ENCODE measurements at regions of chr19 and their contacts with region 1.

Region 1: DNA sequence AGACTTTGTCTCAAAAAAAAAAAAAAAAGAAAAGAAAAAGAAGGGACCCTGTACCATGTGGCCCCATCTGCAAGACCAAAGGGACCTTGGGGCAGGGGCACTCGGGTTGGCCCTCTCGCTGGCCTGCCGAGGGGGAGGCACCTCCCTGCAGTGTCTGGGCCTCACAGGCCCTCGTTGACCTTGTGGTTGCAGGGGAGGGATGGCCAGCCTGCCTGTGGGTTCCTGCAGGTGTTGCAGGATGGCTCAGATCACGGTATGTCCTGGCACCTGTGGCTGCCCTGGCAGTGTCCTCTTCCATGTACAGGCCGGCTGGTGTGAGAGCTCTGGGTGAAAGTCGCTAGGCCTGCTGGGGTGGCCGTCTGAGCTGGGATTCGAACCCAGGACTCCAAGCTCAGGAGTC is 4.7 kb upstream of the PGLS start:
- DNase-seq: no peak
- ATAC-seq: no peak
- H3K4me3 ChIP-seq: no peak overlapping the region
- H3K27ac ChIP-seq: no peak overlapping the region
- H3K4me1 ChIP-seq: peaks cover 22% of the 10 kb centered on the region
- H3K27me3 ChIP-seq: no peaks in the 10 kb centered on the region
- CTCF ChIP-seq: no peak

Region 2: DNA sequence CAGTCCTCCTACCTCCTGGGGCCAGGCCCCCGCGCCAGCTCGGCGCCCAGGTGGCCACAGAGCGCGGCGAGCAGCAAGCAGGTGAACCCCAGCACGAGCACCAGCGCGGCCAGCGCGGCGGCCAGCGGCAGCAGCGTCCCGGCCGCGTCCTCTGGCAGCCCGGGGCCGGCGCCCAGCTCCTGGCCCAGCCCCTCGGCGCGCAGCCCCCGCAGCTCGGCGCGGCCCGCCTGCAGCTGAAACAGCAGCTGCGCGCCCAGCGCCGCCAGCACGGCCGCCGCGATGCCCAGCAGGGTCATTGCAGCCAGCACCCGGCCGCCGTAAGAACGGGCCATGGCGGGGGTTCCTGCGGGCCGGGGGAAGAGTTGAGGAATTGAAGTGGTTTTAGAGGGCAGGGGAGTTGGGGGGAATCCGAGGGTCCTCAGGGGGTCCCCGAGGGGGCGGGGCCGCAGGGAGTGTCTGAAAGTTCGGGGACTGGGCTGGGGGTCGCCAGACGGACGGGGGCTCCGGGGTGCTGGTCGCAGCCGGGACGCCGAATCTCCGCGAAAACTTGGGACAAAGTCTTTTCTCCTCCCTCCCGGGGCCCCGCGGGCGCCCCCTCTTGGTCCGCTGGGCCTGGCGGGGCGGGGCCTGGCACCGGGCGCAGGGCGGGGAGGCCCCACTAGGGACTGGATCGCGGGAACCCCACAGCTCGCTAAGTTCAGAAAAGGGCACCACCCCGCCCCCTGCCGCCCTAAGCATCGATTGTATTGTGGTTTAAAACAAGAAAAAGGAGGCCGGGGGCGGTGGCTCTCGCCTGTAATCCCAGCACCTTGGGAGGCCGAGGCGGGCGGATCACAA is 58.4 kb before region 1 on chr19 and contains the start of gene TMEM221:
- CTCF ChIA-PET with region 1: no interaction called
- POLR2A ChIA-PET with region 1: interaction called, 11 read pairs
- intact Hi-C with region 1: no loop called
- DNase-seq: peak; percentile 54
- ATAC-seq: peak; percentile 53
- H3K4me3 ChIP-seq: peak within 1 kb of the TSS; percentile 74
- H3K27ac ChIP-seq: no peak within 1 kb of the TSS
- H3K4me1 ChIP-seq: peaks cover 9% of the 10 kb centered on the region
- H3K27me3 ChIP-seq: no peaks in the 10 kb centered on the region
- CTCF ChIP-seq: peak; percentile 66
- total RNA-seq, gene TMEM221: 1.7 and 3.0 TPM in 2 replicates